CD8-positive, alpha-beta T cell (primary cell): ENCODE measurements at regions of chr1 and their contacts with region 1.

Region 1: DNA sequence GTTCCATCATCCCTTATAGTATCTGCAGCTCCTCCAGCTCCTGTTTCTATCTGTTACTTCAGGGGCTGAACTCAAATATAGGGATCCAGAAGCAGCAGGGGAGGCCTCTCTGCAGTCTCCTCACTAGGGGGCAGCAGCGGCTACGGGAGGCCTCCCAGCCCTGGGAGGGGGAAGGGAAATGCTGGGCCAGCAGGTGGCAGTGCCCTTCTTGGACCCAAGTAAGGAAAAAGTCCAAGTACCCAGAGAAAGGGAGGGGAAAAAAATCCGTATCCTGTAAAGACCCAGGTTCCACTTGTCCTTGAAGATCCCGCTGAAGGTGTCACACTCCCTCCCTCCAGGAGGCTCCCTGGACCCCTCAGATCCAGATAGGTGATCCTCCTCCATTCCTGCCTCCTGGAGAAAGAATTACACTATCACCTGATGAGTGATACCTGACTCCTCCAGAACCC is 14.1 kb upstream of the NUAK2 start:
- DNase-seq: peak; percentile 52 to 86 (median 80)
- ATAC-seq: peak; percentile 99
- H3K4me3 ChIP-seq: no peak overlapping the region
- H3K4me3 Mint-ChIP-seq: no peak overlapping the region
- H3K27ac ChIP-seq: no peak overlapping the region
- H3K27ac Mint-ChIP-seq: no peak overlapping the region
- H3K4me1 ChIP-seq: no peaks in the 10 kb centered on the region
- H3K4me1 Mint-ChIP-seq: no peaks in the 10 kb centered on the region
- H3K27me3 ChIP-seq: no peaks in the 10 kb centered on the region
- H3K27me3 Mint-ChIP-seq: no peaks in the 10 kb centered on the region
- CTCF ChIP-seq: peak; percentile 85

Region 2: GRCh38 chr1:205313563-205314308 is 21.9 kb before region 1 on chr1:
- CTCF ChIA-PET with region 1: interaction called, 13 read pairs
- POLR2A ChIA-PET with region 1: no interaction called
- intact Hi-C with region 1: no loop called
- DNase-seq: peak in 7 of 9 experiments; percentile 16 to 89 (median 61)
- ATAC-seq: peak; percentile 80
- H3K4me3 ChIP-seq: peak overlapping the region; percentile 46 to 72
- H3K4me3 Mint-ChIP-seq: peak overlapping the region; percentile 87
- H3K27ac ChIP-seq: peak overlapping the region; percentile 70 to 71
- H3K27ac Mint-ChIP-seq: peak overlapping the region; percentile 96
- H3K4me1 ChIP-seq: peaks cover 93% of the 10 kb centered on the region
- H3K4me1 Mint-ChIP-seq: peaks cover 93% of the 10 kb centered on the region
- H3K27me3 ChIP-seq: no peaks in the 10 kb centered on the region
- H3K27me3 Mint-ChIP-seq: no peaks in the 10 kb centered on the region
- CTCF ChIP-seq: no peak

Region 3: GRCh38 chr1:205346956-205347576 is 11.4 kb after region 1 on chr1:
- CTCF ChIA-PET with region 1: interaction called, 19 read pairs
- POLR2A ChIA-PET with region 1: no interaction called
- intact Hi-C with region 1: no loop called
- DNase-seq: no peak
- ATAC-seq: no peak
- H3K4me3 ChIP-seq: no peak overlapping the region
- H3K4me3 Mint-ChIP-seq: no peak overlapping the region
- H3K27ac ChIP-seq: no peak overlapping the region
- H3K27ac Mint-ChIP-seq: no peak overlapping the region
- H3K4me1 ChIP-seq: peaks cover 13% of the 10 kb centered on the region
- H3K4me1 Mint-ChIP-seq: peaks cover 10% of the 10 kb centered on the region
- H3K27me3 ChIP-seq: peaks cover 14 to 17% of the 10 kb centered on the region in 2 experiments
- H3K27me3 Mint-ChIP-seq: peaks cover 46% of the 10 kb centered on the region
- CTCF ChIP-seq: no peak

Region 4: DNA sequence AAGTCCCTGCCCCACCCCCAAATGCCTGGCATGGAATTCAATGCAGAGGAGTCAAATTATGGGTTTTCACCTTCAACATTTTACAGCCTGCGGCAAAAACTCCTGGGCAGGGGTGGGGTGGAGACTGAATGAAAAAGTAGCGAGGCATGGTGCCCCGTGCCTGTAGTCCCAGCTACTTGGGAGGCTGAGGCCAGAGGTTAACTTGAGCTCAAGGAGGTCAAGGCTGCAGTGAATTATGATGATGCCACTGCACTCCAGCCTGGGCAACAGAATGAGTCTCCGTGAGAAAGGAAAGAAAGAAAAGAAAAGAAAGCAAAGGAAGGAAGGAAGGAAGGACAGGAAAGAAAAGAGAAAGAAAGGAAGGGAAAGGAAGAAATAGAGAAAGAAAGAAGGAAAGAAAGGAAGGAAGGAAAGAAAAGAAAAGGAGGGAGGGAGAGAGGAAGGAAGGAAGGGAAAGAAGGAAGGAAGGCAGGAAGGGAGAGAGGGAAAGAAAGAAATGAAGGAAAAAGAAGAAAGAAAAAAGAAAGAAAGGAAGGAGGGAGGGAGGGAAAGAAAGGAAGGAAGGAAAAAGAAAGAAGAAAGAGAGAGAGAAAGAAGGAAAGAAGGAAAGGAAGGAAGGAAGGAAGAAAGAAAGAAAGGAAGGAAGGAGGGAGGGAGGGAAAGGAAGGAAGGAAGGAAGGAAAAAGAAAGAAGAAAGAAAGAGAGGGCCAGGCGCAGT is 75.1 kb after region 1 on chr1:
- CTCF ChIA-PET with region 1: no interaction called
- POLR2A ChIA-PET with region 1: no interaction called
- intact Hi-C with region 1: no loop called
- DNase-seq: no peak
- ATAC-seq: no peak
- H3K4me3 ChIP-seq: no peak overlapping the region
- H3K4me3 Mint-ChIP-seq: no peak overlapping the region
- H3K27ac ChIP-seq: no peak overlapping the region
- H3K27ac Mint-ChIP-seq: no peak overlapping the region
- H3K4me1 ChIP-seq: no peaks in the 10 kb centered on the region
- H3K4me1 Mint-ChIP-seq: peaks cover 14% of the 10 kb centered on the region
- H3K27me3 ChIP-seq: peaks cover 0 to 3% of the 10 kb centered on the region in 2 experiments
- H3K27me3 Mint-ChIP-seq: peaks cover 5% of the 10 kb centered on the region
- CTCF ChIP-seq: no peak